ENCODE measurements at regions of chr7 and their contacts with region 1.

Region 1: DNA sequence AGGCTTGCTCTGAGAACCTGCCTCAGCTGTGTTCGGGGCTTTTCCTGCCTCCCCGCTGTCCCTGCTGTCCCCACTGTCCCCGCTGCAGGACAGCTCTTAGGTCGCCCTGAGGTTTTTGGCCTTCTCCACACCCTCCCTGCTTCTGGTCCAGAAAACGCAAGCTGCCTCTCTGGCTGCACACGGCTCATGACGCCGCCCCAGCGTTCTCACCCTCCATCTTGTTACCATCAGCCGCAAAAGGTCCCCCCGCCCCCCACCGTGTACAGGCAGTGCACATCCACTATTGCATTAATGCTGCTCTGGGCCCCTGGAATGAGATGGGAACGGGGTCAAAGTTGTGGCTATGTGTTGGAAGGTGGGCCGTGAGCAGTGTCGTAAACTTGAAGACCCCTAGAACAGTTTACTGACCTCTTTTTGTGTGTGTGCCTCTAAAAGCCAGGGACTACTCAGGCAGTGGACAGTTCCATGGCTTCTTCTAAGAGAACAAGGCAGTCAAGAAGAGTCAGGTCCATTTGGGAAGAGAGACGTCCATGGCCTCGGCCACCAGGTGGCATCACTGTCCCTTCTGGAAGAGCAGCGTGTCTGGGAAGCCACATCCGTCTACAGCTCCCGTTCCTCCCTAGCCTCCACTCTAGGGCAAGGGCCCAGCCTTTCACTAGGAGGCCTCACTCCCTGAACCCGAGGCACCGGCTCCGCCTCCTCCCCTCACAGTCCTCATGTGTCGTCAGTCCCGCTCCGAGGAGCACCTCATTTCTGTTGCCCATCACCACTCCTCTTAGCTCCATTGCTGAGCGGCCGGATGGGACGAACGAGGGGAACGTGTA is 38.5 kb upstream of the MKRN1 start:
- DNase-seq: peak; percentile 83
- H3K4me3 Mint-ChIP-seq: no peak overlapping the region
- H3K27ac Mint-ChIP-seq: no peak overlapping the region
- H3K4me1 Mint-ChIP-seq: no peaks in the 10 kb centered on the region
- H3K27me3 Mint-ChIP-seq: peaks cover 7% of the 10 kb centered on the region

Region 2: DNA sequence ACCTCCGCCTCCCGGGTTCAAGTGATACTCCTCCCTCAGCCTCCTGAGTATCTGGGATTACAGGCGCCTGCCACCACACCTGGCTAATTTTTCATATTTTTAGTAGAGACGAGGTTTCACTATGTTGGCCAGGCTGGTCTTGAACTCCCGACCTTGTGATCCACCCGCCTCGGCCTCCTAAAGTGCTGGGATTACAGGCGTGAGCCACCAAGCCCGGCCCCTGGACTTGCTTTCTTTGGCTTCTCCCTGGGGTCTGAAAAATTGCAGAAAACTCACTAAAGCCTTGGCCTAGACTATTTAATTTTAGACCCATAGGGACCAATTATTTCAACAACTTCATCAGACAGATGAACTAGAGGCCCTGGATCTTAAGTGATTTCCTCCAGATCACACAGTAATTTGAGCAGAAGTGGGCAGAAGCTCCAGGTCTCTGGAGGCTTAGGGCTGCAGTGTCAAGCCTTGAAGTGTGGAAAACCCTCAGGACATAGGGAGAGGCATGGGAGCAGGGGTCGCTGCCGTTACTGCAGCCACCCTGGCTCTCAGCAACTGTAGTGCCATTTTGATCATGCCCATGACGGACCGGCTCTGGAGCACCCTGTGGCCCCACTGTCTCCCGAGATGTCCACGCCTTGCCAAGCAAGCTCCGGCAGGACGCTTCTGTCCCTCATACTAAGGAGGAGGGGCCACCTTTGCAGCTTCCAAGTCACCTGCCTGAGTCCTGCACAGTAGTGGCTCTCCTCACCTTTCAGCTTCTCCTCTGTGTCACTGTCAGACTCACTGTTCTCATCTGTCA is 50.5 kb after region 1 on chr7:
- CTCF ChIA-PET with region 1: no interaction called
- POLR2A ChIA-PET with region 1: no interaction called
- intact Hi-C with region 1: no loop called
- DNase-seq: no peak
- H3K4me3 Mint-ChIP-seq: no peak overlapping the region
- H3K27ac Mint-ChIP-seq: no peak overlapping the region
- H3K4me1 Mint-ChIP-seq: no peaks in the 10 kb centered on the region
- H3K27me3 Mint-ChIP-seq: peaks cover 3% of the 10 kb centered on the region

Region 3: GRCh38 chr7:140653319-140654108 is 135.8 kb after region 1 on chr7:
- CTCF ChIA-PET with region 1: interaction called, 74 read pairs
- POLR2A ChIA-PET with region 1: no interaction called
- intact Hi-C with region 1: loop called (anchors 1 kb)
- DNase-seq: no peak
- H3K4me3 Mint-ChIP-seq: no peak overlapping the region
- H3K27ac Mint-ChIP-seq: no peak overlapping the region
- H3K4me1 Mint-ChIP-seq: peaks cover 17% of the 10 kb centered on the region
- H3K27me3 Mint-ChIP-seq: peaks cover 5% of the 10 kb centered on the region

Region 4: GRCh38 chr7:140983802-140984201 is 466.0 kb after region 1 on chr7:
- CTCF ChIA-PET with region 1: interaction called, 10 read pairs
- POLR2A ChIA-PET with region 1: no interaction called
- intact Hi-C with region 1: no loop called
- DNase-seq: no peak
- H3K4me3 Mint-ChIP-seq: no peak overlapping the region
- H3K27ac Mint-ChIP-seq: no peak overlapping the region
- H3K4me1 Mint-ChIP-seq: no peaks in the 10 kb centered on the region
- H3K27me3 Mint-ChIP-seq: peaks cover 12% of the 10 kb centered on the region